Activated naive CD4-positive, alpha-beta T cell treated with anti-CD3 and anti-CD28 coated beads for 36 hours (primary cell): ENCODE measurements at regions of chr10 and their contacts with region 1.

Region 1: GRCh38 chr10:61750929-61751471 is 88.3 kb downstream of the CABCOCO1 start:
- DNase-seq: peak; percentile 85
- H3K4me3 Mint-ChIP-seq: no peak overlapping the region
- H3K27ac Mint-ChIP-seq: peak overlapping the region; percentile 14
- H3K4me1 Mint-ChIP-seq: peaks cover 38% of the 10 kb centered on the region
- H3K27me3 Mint-ChIP-seq: no peaks in the 10 kb centered on the region

Region 2: DNA sequence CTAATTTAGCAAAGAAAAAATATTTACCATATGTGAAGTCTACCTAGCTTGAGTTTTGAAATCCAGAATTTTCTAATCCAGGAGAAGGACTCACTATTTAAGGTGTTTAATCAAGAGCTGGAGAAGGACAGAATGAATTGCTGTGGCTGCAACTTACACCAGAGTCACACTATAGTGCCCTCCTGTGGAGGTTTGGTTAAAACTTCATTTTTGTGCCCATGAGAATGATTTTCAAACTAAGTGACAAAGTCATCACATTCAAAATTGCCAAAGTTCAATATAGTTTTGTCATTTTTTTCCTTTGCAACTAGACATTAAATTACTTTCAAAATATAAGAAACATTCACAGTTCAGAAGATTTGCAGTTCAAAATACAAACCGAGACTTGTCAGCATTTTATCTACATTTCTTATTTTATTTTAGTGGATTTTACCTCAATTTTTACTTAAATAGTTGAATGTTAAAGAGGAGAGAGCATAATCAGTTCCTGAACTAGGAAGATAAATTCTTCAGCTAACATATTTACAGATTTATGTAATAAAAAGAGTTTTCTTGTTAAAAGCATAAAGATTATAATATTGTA is 17.6 kb before region 1 on chr10:
- CTCF ChIA-PET with region 1: interaction called, 12 read pairs
- intact Hi-C with region 1: no loop called
- DNase-seq: peak; percentile 37
- H3K4me3 Mint-ChIP-seq: no peak overlapping the region
- H3K27ac Mint-ChIP-seq: no peak overlapping the region
- H3K4me1 Mint-ChIP-seq: no peaks in the 10 kb centered on the region
- H3K27me3 Mint-ChIP-seq: peaks cover 30% of the 10 kb centered on the region

Region 3: DNA sequence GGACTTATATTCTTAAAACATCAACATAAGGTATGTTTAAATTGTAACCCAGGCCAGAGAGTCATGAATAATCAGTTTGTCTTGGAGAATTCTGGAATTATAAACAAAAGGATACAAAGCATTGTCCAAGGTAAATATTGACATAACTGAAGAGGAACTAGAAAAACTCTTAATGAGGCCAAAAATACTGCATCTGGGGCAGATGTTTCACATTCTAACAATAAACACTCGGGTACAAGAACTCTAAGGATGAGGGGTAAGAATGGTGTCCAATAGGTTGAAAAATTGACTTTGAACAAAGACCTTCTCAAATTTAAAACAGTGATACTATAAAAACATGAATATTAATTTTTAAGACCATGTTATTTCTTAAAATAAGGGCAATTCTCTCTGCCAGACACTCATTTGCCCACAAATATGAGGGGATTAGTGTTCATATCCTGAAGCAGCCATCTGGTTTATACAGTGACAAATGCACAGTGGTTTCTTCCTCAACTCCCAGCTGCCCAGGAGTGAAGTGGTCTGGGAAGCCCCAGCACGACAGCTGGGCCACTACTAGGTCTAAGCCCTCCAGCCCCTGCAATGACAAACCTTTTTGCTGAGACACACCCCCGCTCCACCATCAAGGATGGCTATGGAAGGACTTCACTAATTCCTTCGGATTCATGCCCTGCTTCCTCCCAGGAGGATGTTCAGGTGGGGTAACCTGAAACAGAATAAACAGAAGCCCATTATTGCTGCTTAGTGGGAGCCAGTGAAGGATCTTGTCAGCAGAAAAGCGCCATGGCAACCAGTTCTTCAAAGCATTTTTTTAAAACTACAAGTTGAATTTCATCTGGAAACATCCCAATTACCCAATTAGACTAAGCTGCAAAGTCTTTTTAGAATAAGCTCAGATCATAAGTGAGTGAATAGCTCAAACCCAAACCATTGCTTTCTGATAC is 43.0 kb after region 1 on chr10:
- CTCF ChIA-PET with region 1: no interaction called
- intact Hi-C with region 1: no loop called
- DNase-seq: no peak
- H3K4me3 Mint-ChIP-seq: no peak overlapping the region
- H3K27ac Mint-ChIP-seq: no peak overlapping the region
- H3K4me1 Mint-ChIP-seq: no peaks in the 10 kb centered on the region
- H3K27me3 Mint-ChIP-seq: no peaks in the 10 kb centered on the region

Region 4: GRCh38 chr10:61810263-61810662 is 59.3 kb after region 1 on chr10:
- CTCF ChIA-PET with region 1: interaction called, 14 read pairs
- intact Hi-C with region 1: no loop called
- DNase-seq: no peak
- H3K4me3 Mint-ChIP-seq: no peak overlapping the region
- H3K27ac Mint-ChIP-seq: no peak overlapping the region
- H3K4me1 Mint-ChIP-seq: no peaks in the 10 kb centered on the region
- H3K27me3 Mint-ChIP-seq: peaks cover 3% of the 10 kb centered on the region

Region 5: DNA sequence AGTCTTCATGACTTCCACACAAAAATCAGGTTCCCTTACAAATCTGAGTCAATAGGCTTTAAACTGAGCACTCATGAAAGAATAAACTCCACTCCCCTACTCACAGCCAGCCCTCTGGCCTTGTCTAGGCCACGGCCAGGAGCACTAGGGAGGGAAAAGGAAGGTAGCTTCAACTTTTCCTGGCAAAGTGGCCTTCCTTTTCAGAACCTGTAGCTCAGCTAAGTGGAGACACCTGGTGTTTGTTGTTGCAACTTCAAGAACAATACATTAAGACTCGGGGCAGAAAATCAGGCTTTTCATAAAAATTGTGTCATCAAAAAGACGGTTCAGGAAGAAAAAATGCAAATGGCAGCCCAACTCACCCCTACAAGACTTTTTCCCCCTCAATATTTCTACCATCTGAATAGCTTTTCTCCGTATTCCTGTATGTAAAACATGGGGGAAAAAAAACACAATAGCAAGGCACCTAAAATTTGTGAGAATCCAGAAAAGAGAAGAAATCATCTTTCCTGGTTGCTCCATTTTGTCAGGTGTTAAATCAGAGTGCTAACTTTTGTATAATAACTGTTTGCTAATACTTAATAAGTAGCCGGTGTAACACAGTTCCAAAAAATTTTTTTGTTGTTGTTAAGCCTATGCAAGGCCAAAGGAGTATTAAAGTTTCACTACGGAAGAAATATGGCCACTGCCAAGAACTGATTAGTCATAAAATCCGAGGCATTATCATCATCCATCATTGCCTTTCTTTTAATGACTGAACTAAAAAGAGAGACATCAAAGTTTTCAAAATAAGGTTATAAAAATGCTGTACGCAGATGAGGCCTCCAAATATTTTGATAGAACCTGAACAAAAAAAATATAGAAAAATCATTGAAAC is 84.3 kb after region 1 on chr10:
- CTCF ChIA-PET with region 1: interaction called, 13 read pairs
- intact Hi-C with region 1: loop called (anchors 1 kb)
- DNase-seq: peak; percentile 8
- H3K4me3 Mint-ChIP-seq: no peak overlapping the region
- H3K27ac Mint-ChIP-seq: no peak overlapping the region
- H3K4me1 Mint-ChIP-seq: peaks cover 22% of the 10 kb centered on the region
- H3K27me3 Mint-ChIP-seq: peaks cover 2% of the 10 kb centered on the region

Region 6: DNA sequence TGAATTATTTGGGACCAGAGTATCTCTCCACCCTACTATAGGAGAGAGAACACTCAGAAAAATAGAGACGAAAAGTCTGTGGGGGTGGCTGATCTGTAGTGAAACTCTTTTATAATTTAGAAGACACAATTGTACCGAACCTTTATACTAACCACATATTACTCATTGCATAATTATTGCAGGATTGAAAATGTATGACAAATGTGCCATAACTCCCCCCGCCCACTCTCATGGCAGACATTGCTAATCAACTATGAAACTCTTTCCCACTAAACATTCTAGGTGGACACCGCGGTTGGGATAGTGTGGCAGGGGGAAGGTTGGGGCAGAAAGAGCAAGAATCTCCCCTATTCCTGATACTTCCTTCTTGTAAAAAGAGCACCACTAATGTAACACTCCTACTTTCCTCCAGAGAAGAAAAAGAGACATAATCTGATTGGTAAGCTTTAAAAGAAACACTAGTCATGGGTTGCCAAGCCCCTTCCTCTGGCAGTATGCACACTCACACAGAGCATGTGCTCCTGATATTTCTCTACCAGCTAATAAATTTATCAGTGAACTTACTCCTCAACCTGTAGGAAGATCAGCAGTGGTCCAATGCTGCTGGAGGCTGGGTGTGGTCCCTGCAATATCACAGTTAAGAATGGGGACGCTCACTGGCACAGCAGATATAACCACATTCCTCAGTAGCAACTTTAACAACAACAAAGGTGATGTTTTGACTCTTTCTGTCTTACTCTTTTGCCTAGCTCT is 131.8 kb after region 1 on chr10:
- CTCF ChIA-PET with region 1: interaction called, 3 read pairs
- intact Hi-C with region 1: loop called (anchors 1 kb)
- DNase-seq: peak; percentile 88
- H3K4me3 Mint-ChIP-seq: no peak overlapping the region
- H3K27ac Mint-ChIP-seq: peak overlapping the region; percentile 83
- H3K4me1 Mint-ChIP-seq: peaks cover 30% of the 10 kb centered on the region
- H3K27me3 Mint-ChIP-seq: no peaks in the 10 kb centered on the region

Region 7: GRCh38 chr10:62244780-62245467 is 493.9 kb after region 1 on chr10:
- CTCF ChIA-PET with region 1: interaction called, 8 read pairs
- intact Hi-C with region 1: loop called (anchors 1 kb)
- DNase-seq: peak; percentile 74
- H3K4me3 Mint-ChIP-seq: no peak overlapping the region
- H3K27ac Mint-ChIP-seq: peak overlapping the region; percentile 76
- H3K4me1 Mint-ChIP-seq: peaks cover 38% of the 10 kb centered on the region
- H3K27me3 Mint-ChIP-seq: no peaks in the 10 kb centered on the region